Panc1 (cell line): ENCODE measurements at regions of chr9 and their contacts with region 1.

Region 1: DNA sequence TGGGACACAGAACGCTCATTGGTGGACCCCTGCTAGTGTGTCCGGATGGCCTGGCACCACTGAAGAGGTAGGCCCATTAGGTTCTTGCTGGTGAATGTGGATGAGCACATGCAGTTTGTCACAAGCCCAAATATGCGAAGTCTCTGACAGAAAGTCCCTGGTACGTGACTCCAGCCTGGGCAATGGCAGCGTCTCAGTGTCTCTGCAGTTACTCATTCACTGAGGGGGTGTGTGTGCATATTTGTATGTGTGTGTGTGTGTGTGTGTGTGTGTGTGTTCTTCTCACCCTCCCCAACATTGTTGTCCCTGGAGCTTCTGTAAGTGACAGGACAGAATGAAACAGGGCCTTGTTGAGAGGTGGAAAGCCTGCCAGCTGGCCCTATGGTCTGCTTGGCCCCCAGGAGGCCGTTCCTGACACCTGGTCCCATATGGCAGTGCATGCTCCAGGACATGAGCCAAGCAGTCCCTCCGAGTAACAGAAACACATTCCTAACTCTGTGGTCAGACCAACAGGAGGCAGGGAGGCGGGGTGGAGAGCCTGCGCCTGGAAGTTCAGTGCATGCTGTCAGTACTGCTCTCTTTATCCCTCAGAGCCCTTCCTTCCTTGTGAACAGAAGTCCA is 169.9 kb downstream of the SLC28A3 start:
- DNase-seq: no peak
- ATAC-seq: peak; percentile 89
- H3K4me3 ChIP-seq: no peak overlapping the region
- H3K27ac ChIP-seq: no peak overlapping the region
- H3K4me1 ChIP-seq: no peaks in the 10 kb centered on the region
- H3K27me3 ChIP-seq: no peaks in the 10 kb centered on the region
- CTCF ChIP-seq: no peak

Region 2: GRCh38 chr9:83927591-83927990 is 243.0 kb before region 1 on chr9:
- CTCF ChIA-PET with region 1: no interaction called
- POLR2A ChIA-PET with region 1: no interaction called
- in situ Hi-C with region 1: no loop called
- intact Hi-C with region 1: no loop called
- DNase-seq: no peak
- ATAC-seq: no peak
- H3K4me3 ChIP-seq: no peak overlapping the region
- H3K27ac ChIP-seq: no peak overlapping the region
- H3K4me1 ChIP-seq: no peaks in the 10 kb centered on the region
- H3K27me3 ChIP-seq: no peaks in the 10 kb centered on the region
- CTCF ChIP-seq: no peak

Region 3: GRCh38 chr9:84315278-84315877 is 144.7 kb after region 1 on chr9:
- CTCF ChIA-PET with region 1: no interaction called
- POLR2A ChIA-PET with region 1: no interaction called
- in situ Hi-C with region 1: no loop called
- intact Hi-C with region 1: loop called (anchors 10 kb)
- DNase-seq: peak; percentile 25
- ATAC-seq: peak; percentile 69; the same call in 1 of the 2 replicates
- H3K4me3 ChIP-seq: no peak overlapping the region; a peak in 1 of 4 replicates
- H3K27ac ChIP-seq: no peak overlapping the region
- H3K4me1 ChIP-seq: no peaks in the 10 kb centered on the region
- H3K27me3 ChIP-seq: no peaks in the 10 kb centered on the region
- CTCF ChIP-seq: peak; percentile 82